Naive thymus-derived CD4-positive, alpha-beta T cell (primary cell): ENCODE measurements at regions of chr4 and their contacts with region 1.

Region 1: DNA sequence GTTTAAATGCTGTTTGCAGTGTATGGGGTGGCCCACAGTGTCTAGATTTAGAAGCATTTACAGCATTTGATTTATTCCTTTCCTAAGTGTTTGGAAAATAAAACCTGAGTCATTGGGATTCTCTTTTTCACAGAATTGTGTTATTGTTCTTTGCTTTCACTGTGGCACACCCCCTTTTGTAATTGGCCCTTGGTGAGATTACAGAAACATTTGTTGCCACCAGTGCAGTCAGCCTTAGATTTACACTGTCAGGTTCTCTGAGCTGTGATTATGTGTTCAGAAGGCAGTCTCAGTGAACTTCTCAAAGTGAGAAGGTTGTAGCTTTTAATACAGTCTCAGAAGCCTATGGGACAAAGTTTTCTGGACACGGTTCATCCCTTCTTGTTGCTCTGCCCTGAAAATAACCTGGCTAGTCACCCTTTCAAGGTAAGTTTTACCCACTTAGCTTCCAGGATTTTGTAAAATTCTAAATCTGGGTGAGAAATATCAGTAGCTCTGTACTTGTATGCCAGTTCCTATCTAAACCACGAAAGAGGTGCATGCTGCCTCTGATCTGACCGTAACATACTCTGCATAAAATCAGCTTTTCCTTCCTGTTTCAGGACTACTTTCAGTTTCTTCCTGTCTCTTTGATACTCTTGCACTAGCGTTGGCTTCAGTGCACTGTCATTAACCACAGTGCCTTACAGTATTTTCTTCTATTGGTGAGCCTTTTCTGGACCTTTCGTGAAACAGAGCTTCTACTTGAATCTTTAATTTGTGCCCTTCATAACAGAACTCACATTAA is 12.6 kb downstream of the RUFY3 start:
- DNase-seq: peak in 7 of 9 donors; percentile 52 to 74 (median 68)
- ATAC-seq: peak; percentile 91
- H3K4me3 ChIP-seq: peak overlapping the region; percentile 52
- H3K4me3 Mint-ChIP-seq: peak overlapping the region; percentile 67 to 92 (median 82)
- H3K27ac ChIP-seq: peak overlapping the region; percentile 73
- H3K27ac Mint-ChIP-seq: peak overlapping the region; percentile 33 to 94 (median 87)
- H3K4me1 ChIP-seq: peaks cover 34 to 42% of the 10 kb centered on the region in 2 donors
- H3K4me1 Mint-ChIP-seq: peaks cover 23 to 57% (median 48%) of the 10 kb centered on the region in 7 donors
- H3K27me3 ChIP-seq: no peaks in the 10 kb centered on the region
- H3K27me3 Mint-ChIP-seq: no peaks in the 10 kb centered on the region

Region 2: DNA sequence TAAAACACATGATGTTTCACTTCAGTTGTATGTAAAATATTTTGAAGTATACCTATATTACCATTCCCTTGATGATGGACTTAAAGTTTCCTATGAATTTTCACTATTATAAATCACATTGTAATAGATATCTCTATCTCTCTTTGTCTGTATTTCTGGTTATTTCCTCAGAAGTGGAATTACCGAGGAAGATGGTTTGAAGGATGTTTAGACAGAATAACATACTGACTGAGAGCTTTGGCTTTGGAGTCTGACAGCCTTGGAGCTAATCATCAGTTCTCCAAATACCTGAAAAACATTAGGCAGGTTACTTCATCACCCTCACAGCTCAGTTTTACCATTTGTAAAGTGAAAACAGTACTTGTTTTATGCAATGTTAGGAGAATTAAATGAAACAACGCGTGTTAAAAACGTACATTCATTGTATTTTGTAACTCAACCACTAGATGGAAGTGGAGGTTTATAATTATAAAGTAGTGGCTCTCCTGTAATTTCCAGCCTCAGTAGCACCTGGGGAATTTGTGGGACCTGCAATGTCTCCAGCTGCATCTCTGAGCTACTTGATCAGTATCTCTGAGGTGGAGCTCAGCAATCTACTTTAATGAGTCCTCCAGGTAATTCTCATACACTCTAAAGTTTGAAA is 82.4 kb before region 1 on chr4:
- CTCF ChIA-PET with region 1: interaction called, 4 read pairs
- POLR2A ChIA-PET with region 1: no interaction called
- intact Hi-C with region 1: loop called in 1 of 2 experiments (anchors 1 kb)
- DNase-seq: peak in 6 of 9 donors; percentile 12 to 47 (median 40)
- ATAC-seq: peak; percentile 61
- H3K4me3 ChIP-seq: no peak overlapping the region
- H3K4me3 Mint-ChIP-seq: no peak overlapping the region
- H3K27ac ChIP-seq: no peak overlapping the region
- H3K27ac Mint-ChIP-seq: no peak overlapping the region
- H3K4me1 ChIP-seq: no peaks in the 10 kb centered on the region
- H3K4me1 Mint-ChIP-seq: peaks cover 0 to 6% (median 0%) of the 10 kb centered on the region in 7 donors
- H3K27me3 ChIP-seq: no peaks in the 10 kb centered on the region
- H3K27me3 Mint-ChIP-seq: peaks cover 0 to 25% (median 3%) of the 10 kb centered on the region in 5 donors

Region 3: GRCh38 chr4:70721747-70722146 is 12.6 kb before region 1 on chr4 and contains the start of gene RUFY3:
- CTCF ChIA-PET with region 1: interaction called, 9 read pairs
- POLR2A ChIA-PET with region 1: interaction called, 15 read pairs
- intact Hi-C with region 1: loop called in 1 of 2 experiments (anchors 1 kb)
- DNase-seq: no peak
- ATAC-seq: peak; percentile 6
- H3K4me3 ChIP-seq: no peak within 1 kb of the TSS
- H3K4me3 Mint-ChIP-seq: peak within 1 kb of the TSS; percentile 29 to 64 (median 54)
- H3K27ac ChIP-seq: peak within 1 kb of the TSS; percentile 20
- H3K27ac Mint-ChIP-seq: peak within 1 kb of the TSS; percentile 23 to 84 (median 75)
- H3K4me1 ChIP-seq: peaks cover 4 to 19% of the 10 kb centered on the region in 2 donors
- H3K4me1 Mint-ChIP-seq: peaks cover 13 to 36% (median 23%) of the 10 kb centered on the region in 7 donors
- H3K27me3 ChIP-seq: no peaks in the 10 kb centered on the region
- H3K27me3 Mint-ChIP-seq: peaks cover 0 to 3% (median 0%) of the 10 kb centered on the region in 5 donors
- total RNA-seq, gene RUFY3: 17.3 to 41.2 (median 39.3) TPM

Region 4: GRCh38 chr4:70839589-70840093 is 105.3 kb after region 1 on chr4 and contains the start of gene GRSF1:
- CTCF ChIA-PET with region 1: interaction called, 5 read pairs
- POLR2A ChIA-PET with region 1: interaction called, 7 read pairs
- intact Hi-C with region 1: loop called (anchors 1 to 2 kb)
- DNase-seq: peak; percentile 92 to 96 (median 95)
- ATAC-seq: peak; percentile 96
- H3K4me3 ChIP-seq: peak within 1 kb of the TSS; percentile 83
- H3K4me3 Mint-ChIP-seq: peak within 1 kb of the TSS; percentile 89 to 99 (median 97)
- H3K27ac ChIP-seq: peak within 1 kb of the TSS; percentile 88
- H3K27ac Mint-ChIP-seq: peak within 1 kb of the TSS; percentile 91 to 98 (median 96)
- H3K4me1 ChIP-seq: peaks cover 17 to 22% of the 10 kb centered on the region in 2 donors
- H3K4me1 Mint-ChIP-seq: peaks cover 8 to 40% (median 29%) of the 10 kb centered on the region in 7 donors
- H3K27me3 ChIP-seq: no peaks in the 10 kb centered on the region
- H3K27me3 Mint-ChIP-seq: no peaks in the 10 kb centered on the region
- total RNA-seq, gene GRSF1: 35.9 to 76.0 (median 48.0) TPM

Region 5: GRCh38 chr4:71004281-71004851 is 270.0 kb after region 1 on chr4:
- CTCF ChIA-PET with region 1: interaction called, 4 read pairs
- POLR2A ChIA-PET with region 1: interaction called, 5 read pairs
- intact Hi-C with region 1: loop called (anchors 2 kb)
- DNase-seq: peak in 8 of 9 donors; percentile 47 to 77 (median 52)
- ATAC-seq: peak; percentile 89
- H3K4me3 ChIP-seq: peak overlapping the region; percentile 8
- H3K4me3 Mint-ChIP-seq: peak overlapping the region; percentile 30 to 80 (median 68)
- H3K27ac ChIP-seq: peak overlapping the region; percentile 70
- H3K27ac Mint-ChIP-seq: peak overlapping the region; percentile 58 to 93 (median 86)
- H3K4me1 ChIP-seq: peaks cover 23 to 28% of the 10 kb centered on the region in 2 donors
- H3K4me1 Mint-ChIP-seq: peaks cover 68 to 92% (median 88%) of the 10 kb centered on the region in 7 donors
- H3K27me3 ChIP-seq: no peaks in the 10 kb centered on the region
- H3K27me3 Mint-ChIP-seq: no peaks in the 10 kb centered on the region